Left cardiac atrium (tissue), 4 donors: ENCODE measurements at regions of chr15 and their contacts with region 1.

Region 1: DNA sequence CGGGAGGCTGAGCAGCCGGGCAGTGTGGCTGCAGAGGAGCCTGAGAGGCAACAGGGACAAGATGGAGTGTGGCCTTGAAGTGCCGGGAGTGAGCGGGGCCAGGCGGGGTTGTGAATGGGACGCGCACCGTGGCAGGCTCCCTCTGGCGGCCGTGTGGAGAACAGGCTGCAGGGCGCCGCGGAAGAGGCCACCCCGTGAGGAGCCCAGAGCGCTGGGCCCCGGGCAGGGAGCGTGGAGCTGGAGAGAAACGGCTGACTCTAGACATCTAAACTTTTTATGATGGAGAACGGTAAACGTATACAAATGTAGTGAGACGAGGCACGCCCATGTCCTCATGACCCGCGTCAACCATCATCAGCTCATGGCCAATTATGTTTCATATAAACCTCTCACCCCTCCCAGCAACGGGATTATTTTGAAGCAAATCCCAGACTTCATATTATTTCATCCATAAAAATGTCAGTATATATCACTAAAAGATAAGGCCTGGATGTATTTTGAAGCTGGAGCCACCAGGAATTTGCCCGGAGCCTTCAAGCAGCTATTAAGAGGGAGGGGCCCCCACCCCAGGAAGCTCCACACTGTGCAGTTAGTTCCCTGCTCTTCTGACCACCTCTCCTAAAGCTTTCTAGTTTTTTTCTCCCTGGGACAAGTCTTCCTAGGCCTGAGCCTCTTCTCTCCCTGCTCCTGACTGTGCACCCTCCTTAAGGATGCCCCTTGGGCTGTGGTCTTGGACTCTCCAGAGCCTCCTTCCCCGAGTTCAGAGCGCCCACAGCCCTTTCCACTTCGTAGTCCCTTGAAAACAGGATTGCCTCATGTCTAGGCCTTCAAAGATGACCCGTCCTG is 149.4 kb downstream of the SMAD6 start:
- DNase-seq: peak; percentile 90
- ATAC-seq: peak; percentile 90 to 91

Region 2: DNA sequence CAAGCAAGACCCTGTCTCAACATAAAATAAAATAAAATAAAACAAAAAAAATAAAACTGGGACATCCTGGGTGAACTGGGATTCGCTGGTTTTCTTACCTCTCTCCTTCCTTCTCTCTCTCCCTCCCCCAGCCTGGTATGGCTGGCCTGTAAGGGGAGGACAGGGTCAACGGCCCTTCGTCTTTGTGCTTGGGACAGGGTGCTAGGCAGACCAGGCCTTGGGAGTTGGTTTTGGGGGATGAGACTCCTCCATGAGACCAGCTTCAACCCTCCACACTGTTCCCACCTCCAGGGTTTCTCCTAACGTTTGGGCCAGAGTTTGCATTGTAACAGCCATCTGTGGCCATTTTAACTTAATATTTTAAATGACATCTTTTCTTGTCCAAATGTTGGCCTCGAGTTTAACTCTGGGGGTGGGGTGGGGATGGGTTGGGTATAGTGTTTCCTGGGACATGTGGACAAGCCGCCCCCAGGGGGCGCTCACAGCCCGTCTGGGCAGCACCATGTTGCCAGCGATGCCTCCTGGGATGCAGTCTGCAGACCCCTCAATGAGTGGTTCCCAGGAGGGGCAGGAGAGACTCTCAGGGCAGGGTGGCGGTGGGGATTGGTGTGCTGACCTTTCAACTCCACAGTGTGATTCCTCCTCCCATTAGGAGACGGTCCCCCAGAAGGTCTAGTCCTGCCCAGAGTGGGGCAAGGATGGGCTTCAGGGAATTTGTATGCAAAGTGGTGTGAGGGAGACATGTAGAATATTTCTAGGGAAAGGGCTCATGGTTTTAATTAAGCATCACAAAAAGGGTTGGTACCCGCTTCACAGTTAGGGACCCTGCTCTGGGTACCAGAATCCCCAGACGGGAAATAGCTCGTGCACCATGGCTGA is 247.9 kb before region 1 on chr15:
- intact Hi-C with region 1: loop called (anchors 2 to 5 kb)
- DNase-seq: peak; percentile 77
- ATAC-seq: peak; percentile 86 to 91

Region 3: GRCh38 chr15:66619151-66619903 is 232.1 kb before region 1 on chr15:
- intact Hi-C with region 1: loop called (anchors 5 kb)
- DNase-seq: peak; percentile 83
- ATAC-seq: peak; percentile 62 to 70

Region 4: DNA sequence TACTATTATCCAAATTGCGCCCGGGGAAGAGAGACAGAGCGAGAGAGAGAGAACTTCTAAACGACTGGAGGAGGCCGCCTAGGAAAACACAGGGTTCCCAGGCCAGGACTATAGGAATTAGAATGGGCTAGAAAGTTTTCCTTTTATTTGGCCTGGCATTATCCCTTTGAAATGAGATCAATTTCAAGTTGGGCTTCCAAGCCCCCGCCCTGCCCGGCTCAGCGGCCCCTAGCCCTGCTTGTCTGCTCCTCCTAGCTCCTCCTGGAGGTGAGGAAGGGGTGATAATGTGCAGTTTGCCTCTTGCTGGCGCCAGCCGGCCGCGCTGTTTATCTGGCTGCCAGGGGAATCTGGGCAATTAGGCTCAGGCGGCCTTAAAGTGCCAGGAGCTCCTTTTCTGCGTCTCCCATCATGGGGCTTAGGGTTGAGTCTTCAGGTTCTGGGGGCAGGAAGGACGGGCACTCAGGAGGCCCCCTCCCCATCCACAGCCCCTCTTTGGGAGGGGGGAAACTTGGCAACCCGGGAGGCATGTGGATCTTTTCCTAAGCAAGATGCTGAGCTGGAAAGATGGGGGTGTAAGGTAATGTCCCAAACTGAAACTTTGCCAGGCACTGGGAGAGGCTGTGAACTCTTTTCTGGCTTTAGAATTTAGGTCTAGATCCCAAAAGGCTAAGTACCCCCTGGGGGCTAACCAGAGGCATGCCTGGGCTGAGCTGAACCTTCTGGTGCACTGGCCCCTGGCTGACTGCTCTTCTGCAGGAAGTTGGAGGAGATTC is 144.0 kb before region 1 on chr15:
- intact Hi-C with region 1: loop called (anchors 5 to 10 kb)
- DNase-seq: no peak
- ATAC-seq: peak; percentile 28 to 50

Region 5: DNA sequence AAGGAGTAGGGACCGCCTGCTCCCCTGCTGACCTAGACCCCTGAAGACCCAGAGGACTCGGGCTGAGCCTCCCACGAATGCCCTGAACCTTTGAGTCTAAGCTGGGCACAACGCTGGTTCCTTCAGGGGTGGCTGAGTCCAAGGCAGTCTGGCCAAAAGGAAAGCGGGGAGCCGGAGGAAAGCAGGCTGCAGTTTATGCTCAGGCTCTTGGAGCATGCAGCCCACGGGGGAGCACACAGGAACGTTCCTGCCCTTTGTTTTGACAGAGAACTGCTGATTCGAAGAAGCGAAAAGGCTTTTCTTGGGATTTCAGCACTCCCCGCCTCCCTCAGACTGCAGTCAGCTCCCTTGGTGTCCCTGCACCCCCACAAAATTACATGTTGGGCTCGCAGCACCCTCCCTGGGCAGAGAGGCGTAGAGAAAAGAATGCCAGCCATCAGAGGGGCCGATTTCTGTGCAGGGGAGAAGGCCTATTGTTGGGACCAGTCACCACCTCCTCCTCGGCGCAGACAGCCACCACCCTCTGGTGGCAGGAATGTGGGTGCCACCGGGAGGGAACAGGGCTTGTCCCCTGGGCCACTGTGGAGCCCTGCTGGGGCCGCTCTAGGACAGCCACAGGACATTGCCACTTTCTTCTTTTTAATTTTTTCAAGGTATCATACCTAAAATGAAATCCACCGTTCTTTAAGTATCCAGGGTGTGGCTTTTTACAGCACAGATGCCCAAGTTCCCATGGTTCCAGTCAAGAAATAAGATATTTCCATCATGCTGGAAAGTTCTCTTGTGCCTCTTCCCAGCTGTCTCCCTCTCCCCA is 77.2 kb before region 1 on chr15:
- intact Hi-C with region 1: loop called (anchors 1 to 5 kb)
- DNase-seq: peak; percentile 82
- ATAC-seq: peak; percentile 88 to 89

Region 6: GRCh38 chr15:66789029-66790025 is 62.1 kb before region 1 on chr15:
- intact Hi-C with region 1: loop called in 1 of 2 experiments (anchors 5 kb)
- DNase-seq: peak; percentile 62
- ATAC-seq: peak; percentile 76 to 80

Region 7: GRCh38 chr15:66815322-66815721 is 36.1 kb before region 1 on chr15:
- intact Hi-C with region 1: no loop called
- DNase-seq: no peak
- ATAC-seq: peak in 1 of 2 donors; percentile 49